Cardiac septum (tissue), 1 donor: ENCODE measurements at regions of chr15 and their contacts with region 1.

Region 1: GRCh38 chr15:78170848-78171773 is 21.9 kb downstream of the IDH3A start:
- DNase-seq: no peak

Region 2: GRCh38 chr15:78131295-78132061 is 39.6 kb before region 1 on chr15 and contains the start of gene CIB2:
- intact Hi-C with region 1: loop called (anchors 5 kb)
- DNase-seq: peak; percentile 88
- total RNA-seq, gene CIB2: 16.7 TPM